ENCODE measurements at regions of chr2 and their contacts with region 1.

Region 1: DNA sequence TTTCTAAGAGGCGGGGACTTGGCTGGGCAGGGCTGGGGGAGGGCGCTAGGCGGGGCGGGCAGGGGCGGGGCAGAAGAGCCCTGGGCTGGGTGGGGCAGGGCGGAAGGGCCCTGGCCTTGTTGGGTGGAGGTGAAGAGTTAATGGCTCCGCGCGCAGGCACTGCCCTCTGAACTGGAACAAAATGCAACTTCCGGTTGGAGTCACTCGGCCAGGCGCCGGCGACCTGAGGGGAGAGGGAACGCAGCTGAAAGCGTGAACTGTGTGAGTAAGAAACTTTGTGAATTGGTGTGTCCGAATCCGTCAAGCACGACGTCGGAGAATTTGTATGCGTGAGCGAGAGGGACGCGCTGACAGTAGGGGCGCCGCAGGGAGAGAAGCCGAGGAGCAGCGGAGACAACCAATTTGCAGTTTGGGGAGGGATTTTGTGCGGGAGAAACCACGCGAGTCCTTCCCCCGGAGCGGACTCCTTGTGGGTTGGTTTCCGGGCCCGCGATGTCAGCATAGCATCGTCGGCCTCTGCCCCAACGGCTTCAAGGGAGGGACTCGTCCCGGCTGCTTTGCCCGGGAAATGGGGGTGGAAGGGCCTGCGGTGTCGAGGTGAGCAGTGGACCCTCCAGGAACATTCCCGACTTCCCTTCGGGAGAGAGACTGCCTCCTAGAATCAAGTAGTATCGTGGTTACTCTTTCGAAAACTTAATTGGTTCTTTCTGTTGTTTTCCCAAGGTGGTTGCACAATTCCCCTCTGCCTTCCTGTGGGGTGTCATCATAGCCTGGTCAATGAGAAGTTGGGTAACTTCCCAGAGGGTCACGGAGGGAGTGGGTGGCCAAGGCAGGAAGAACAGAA is at the start of gene TANK:
- DNase-seq: peak; percentile 82 to 95
- ATAC-seq: peak; percentile 90 to 96 (median 93)
- H3K4me3 ChIP-seq: peak within 1 kb of the TSS; percentile 98
- H3K4me3 Mint-ChIP-seq: peak within 1 kb of the TSS; percentile 96
- H3K27ac ChIP-seq: peak within 1 kb of the TSS; percentile 99
- H3K27ac Mint-ChIP-seq: peak within 1 kb of the TSS; percentile 91 to 96
- H3K4me1 ChIP-seq: no peaks in the 10 kb centered on the region
- H3K4me1 Mint-ChIP-seq: peaks cover 27 to 35% of the 10 kb centered on the region in 2 donors
- H3K27me3 ChIP-seq: no peaks in the 10 kb centered on the region
- H3K27me3 Mint-ChIP-seq: peaks cover 0 to 2% of the 10 kb centered on the region in 2 donors
- CTCF ChIP-seq: no peak
- total RNA-seq, gene TANK: 68.9 to 121 (median 76.1) TPM

Region 2: DNA sequence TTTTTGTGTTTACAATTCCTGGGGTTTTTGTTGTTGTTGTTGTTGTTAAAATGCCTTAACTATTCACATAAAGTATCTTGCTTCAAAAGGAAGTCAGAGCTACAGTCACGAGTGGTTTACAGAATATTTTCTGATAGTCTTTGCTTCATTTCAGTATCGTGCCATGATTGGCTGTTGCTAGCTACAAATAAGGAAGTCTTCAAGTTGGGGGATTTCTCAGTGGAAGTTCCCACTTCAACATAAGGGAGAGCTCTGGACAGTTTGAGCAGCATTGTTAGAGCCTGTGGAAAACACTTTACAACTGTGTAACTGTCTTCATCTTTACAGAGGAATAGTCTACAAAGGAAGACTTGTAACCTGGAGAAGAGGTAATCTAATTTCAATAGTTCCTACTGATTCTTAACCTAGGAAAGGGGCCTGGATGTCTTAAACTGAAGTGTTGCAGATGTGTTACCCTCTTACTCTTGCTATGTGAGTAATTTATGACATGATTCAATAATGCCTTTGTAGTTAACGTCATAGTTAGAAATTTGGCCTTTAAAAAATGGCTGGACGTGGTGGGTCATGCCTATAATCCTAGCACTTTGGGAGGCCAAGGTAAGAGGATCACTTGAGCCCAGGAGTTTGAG is 23.6 kb before region 1 on chr2:
- intact Hi-C with region 1: loop called (anchors 2 kb)
- DNase-seq: peak in 1 of 2 donors; percentile 92
- ATAC-seq: peak; percentile 88 to 95 (median 93)
- H3K4me3 ChIP-seq: peak overlapping the region; percentile 50
- H3K4me3 Mint-ChIP-seq: peak overlapping the region; percentile 92
- H3K27ac ChIP-seq: peak overlapping the region; percentile 97
- H3K27ac Mint-ChIP-seq: peak overlapping the region; percentile 87 to 94
- H3K4me1 ChIP-seq: peaks cover 16% of the 10 kb centered on the region
- H3K4me1 Mint-ChIP-seq: peaks cover 33 to 48% of the 10 kb centered on the region in 2 donors
- H3K27me3 ChIP-seq: no peaks in the 10 kb centered on the region
- H3K27me3 Mint-ChIP-seq: peaks cover 3 to 6% of the 10 kb centered on the region in 2 donors
- CTCF ChIP-seq: no peak

Region 3: DNA sequence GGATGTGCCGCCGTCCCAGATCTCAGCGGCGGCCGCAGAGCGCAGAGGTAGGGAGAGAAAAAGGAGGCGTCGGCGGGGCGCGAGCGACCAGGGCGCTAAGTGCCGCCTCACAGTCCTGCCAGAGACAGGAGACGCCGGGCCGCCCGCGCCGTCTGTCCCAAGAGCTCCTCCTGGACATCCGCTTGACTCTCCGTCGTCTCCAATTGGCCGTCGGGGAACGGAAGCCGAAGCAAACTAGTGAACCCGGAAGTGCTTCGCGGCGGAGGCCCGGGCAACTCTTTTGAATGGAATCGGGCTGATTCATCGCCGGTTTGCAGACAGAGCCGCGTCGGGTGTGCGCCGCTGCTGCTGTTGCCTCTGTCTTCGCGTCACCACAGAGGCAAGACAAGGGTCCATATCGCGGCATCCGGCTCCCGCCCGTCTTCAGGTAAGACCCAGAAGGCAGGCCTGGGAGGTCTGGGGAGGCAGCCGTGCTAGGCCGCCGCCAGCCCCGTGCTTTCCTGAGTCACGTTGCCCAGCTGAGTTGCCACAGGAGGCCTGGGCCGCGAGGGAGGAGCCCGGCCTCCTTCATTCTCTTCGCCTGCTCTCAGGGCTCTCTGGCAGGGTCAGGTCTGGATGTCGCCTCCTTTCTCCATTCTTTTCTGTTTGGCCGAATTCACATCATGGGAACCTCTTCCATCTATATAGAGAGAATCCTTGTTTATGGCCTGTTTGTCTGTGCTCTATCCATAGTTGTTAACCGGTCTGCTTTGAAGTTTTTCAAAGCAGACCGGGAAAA is 147.9 kb after region 1 on chr2 and contains the start of gene PSMD14:
- intact Hi-C with region 1: loop called (anchors 1 kb)
- DNase-seq: peak; percentile 84 to 93
- ATAC-seq: peak; percentile 91 to 95 (median 93)
- H3K4me3 ChIP-seq: peak within 1 kb of the TSS; percentile 77
- H3K4me3 Mint-ChIP-seq: peak within 1 kb of the TSS; percentile 95
- H3K27ac ChIP-seq: peak within 1 kb of the TSS; percentile 81
- H3K27ac Mint-ChIP-seq: peak within 1 kb of the TSS; percentile 94 to 97
- H3K4me1 ChIP-seq: peaks cover 5% of the 10 kb centered on the region
- H3K4me1 Mint-ChIP-seq: peaks cover 33 to 37% of the 10 kb centered on the region in 2 donors
- H3K27me3 ChIP-seq: no peaks in the 10 kb centered on the region
- H3K27me3 Mint-ChIP-seq: peaks cover 0 to 6% of the 10 kb centered on the region in 2 donors
- CTCF ChIP-seq: no peak
- total RNA-seq, gene PSMD14: 34.2 to 40.9 (median 36.2) TPM